OCI-LY7 (cell line): ENCODE measurements at regions of chr5 and their contacts with region 1.

Region 1: GRCh38 chr5:1763548-1763911 is 36.1 kb downstream of the MRPL36 start:
- DNase-seq: peak; percentile 48
- H3K4me3 ChIP-seq: no peak overlapping the region
- H3K27ac ChIP-seq: no peak overlapping the region
- H3K4me1 ChIP-seq: peaks cover 21% of the 10 kb centered on the region
- CTCF ChIP-seq: peak; percentile 81

Region 2: DNA sequence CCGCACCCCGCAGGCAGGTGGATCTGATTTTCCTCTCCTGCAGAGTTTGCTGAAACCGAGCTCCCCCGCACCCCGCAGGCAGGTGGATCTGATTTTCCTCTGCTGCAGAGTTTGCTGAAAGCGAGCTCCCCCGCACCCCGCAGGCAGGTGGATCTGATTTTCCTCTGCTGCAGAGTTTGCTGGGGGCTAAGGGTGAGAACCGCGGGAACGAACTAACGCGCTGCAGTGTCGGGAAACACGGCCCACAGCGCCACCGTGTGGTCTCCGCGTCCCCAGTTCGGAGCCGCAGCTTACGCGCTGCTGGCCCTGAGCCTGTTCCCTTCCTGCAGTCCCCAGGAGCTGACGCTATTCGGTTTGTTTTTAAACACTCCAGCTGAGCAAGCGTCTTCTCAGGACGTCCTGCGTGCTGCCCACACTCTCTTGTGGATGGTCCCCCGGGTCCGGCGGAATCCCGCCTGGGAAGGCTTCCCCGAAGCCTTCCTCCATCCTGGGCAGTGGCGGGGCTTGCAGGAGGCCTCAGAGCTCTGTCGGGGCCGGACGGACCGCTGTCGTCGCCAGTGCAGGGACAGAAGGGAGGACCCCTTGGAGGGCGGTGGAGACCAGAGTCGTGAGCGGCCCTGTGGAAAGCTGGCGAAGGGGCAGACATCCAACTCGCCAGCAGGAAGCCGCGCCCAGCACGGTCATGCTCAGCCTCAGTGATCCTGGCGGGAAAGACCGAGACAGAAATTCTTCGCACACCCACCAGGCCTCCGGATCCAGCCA is 118.5 kb before region 1 on chr5:
- CTCF ChIA-PET with region 1: no interaction called
- POLR2A ChIA-PET with region 1: no interaction called
- intact Hi-C with region 1: no loop called
- DNase-seq: peak; percentile 86
- H3K4me3 ChIP-seq: peak overlapping the region; percentile 36
- H3K27ac ChIP-seq: no peak overlapping the region
- H3K4me1 ChIP-seq: peaks cover 8% of the 10 kb centered on the region
- CTCF ChIP-seq: peak; percentile 75

Region 3: GRCh38 chr5:1799602-1800471 is 36.3 kb after region 1 on chr5 and contains the start of gene MRPL36:
- CTCF ChIA-PET with region 1: interaction called, 3 read pairs
- POLR2A ChIA-PET with region 1: interaction called, 4 read pairs
- intact Hi-C with region 1: loop called (anchors 1 kb)
- DNase-seq: peak; percentile 93
- H3K4me3 ChIP-seq: peak within 1 kb of the TSS; percentile 87
- H3K27ac ChIP-seq: peak within 1 kb of the TSS; percentile 79
- H3K4me1 ChIP-seq: peaks cover 23% of the 10 kb centered on the region
- CTCF ChIP-seq: no peak
- total RNA-seq, gene MRPL36: 82.5 and 91.7 TPM in 2 replicates

Region 4: GRCh38 chr5:1874771-1875220 is 111.3 kb after region 1 on chr5:
- CTCF ChIA-PET with region 1: no interaction called
- POLR2A ChIA-PET with region 1: no interaction called
- intact Hi-C with region 1: loop called (anchors 10 kb)
- DNase-seq: peak; percentile 72
- H3K4me3 ChIP-seq: peak overlapping the region; percentile 58
- H3K27ac ChIP-seq: no peak overlapping the region
- H3K4me1 ChIP-seq: peaks cover 35% of the 10 kb centered on the region
- CTCF ChIP-seq: no peak

Region 5: GRCh38 chr5:2017540-2018389 is 254.2 kb after region 1 on chr5:
- CTCF ChIA-PET with region 1: interaction called, 3 read pairs
- POLR2A ChIA-PET with region 1: no interaction called
- intact Hi-C with region 1: loop called (anchors 1 kb)
- DNase-seq: peak; percentile 46
- H3K4me3 ChIP-seq: no peak overlapping the region
- H3K27ac ChIP-seq: no peak overlapping the region
- H3K4me1 ChIP-seq: no peaks in the 10 kb centered on the region
- CTCF ChIP-seq: peak; percentile 83

Region 6: DNA sequence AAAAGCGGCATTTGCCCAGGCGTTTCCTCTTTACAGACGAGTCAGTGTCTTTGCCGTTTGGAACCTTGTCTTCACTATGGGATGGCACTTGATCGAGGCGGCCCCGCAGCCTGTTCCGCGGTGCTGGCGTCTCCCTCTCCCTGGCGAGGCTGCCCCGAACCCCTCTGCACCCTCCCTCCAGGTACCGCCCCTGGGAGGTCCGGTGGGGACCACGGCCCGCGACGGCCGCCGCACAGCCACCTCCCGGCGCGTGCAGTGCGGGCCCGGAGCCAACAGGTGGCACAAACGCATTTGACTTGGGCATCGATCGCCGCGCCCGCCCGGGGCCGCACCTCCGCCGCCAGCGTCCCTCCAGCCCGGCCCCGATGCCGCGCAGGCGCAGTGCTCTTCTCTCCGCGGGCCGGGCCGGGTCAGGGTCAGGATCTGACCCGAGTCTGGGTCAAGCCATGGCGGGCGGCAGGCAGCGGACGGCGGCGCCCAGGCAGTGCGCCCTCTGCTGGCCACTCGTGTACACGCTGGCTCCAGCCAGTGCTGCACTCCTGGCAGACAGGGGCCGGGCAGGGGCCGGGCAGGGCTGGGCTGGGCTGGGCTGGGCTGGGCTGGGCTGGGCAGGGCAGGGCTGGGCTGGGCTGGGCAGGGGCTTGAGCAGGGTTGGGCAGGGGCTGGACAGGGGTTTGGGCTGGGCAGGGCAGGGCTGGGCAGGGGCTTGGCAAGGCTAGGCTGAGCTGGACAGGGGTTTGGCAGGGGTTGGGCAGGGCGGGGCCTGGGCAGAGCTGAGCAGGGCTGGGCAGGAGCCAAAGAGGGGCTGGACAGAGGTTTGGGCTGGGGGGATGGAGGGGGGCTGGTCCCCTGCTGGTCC is 275.0 kb after region 1 on chr5:
- CTCF ChIA-PET with region 1: no interaction called
- POLR2A ChIA-PET with region 1: no interaction called
- intact Hi-C with region 1: loop called (anchors 2 kb)
- DNase-seq: peak; percentile 64
- H3K4me3 ChIP-seq: peak overlapping the region; percentile 64
- H3K27ac ChIP-seq: no peak overlapping the region
- H3K4me1 ChIP-seq: no peaks in the 10 kb centered on the region
- CTCF ChIP-seq: peak; percentile 93

Region 7: DNA sequence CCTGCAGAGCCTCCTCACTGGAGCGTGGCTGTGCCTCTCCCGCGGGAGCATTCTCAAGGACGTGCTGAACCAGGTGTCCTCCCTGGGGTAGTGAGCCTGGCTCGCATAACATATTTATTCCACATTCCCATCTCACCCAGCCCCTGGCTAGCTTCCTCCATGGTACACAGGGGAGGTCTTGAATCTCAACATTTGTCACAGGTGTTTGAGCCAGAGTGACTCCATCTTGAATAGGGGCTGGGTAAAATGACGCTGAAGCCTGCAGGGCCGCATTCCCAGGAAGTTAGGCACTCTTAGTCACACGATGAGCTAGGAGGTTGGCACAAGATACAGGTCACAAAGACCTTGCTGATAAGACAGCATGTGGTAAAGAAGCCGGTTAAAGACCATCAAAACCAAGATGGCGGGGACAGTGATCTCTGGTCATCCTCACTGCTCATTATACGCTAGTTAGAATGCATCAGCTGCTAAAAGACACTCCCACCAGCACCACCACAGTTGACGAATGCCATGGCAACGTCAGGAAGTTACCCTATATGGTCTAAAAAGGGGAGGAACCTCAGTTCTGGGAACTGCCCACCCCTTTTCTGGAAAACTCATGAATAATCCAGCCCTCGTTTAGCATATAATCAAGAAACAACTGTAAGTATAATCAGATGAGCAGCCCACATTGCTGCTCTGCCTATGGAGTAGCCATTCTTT is 393.0 kb after region 1 on chr5:
- CTCF ChIA-PET with region 1: no interaction called
- POLR2A ChIA-PET with region 1: no interaction called
- intact Hi-C with region 1: loop called (anchors 10 kb)
- DNase-seq: no peak
- H3K4me3 ChIP-seq: no peak overlapping the region
- H3K27ac ChIP-seq: no peak overlapping the region
- H3K4me1 ChIP-seq: no peaks in the 10 kb centered on the region
- CTCF ChIP-seq: no peak